H1 (cell line): ENCODE measurements at regions of chr10 and their contacts with region 1.

Region 1: GRCh38 chr10:77148996-77149395 is 488.6 kb downstream of the KCNMA1 start:
- DNase-seq: no peak
- H3K4me3 ChIP-seq: no peak overlapping the region
- H3K27ac ChIP-seq: no peak overlapping the region
- H3K4me1 ChIP-seq: peaks cover 4 to 14% (median 12%) of the 10 kb centered on the region in 4 experiments; a peak in 6 of 7 replicates
- H3K27me3 ChIP-seq: no peaks in the 10 kb centered on the region
- CTCF ChIP-seq: no peak
- EP300 ChIP-seq: no peak
- POLR2A ChIP-seq: no peak
- RAD21 ChIP-seq: no peak

Region 2: DNA sequence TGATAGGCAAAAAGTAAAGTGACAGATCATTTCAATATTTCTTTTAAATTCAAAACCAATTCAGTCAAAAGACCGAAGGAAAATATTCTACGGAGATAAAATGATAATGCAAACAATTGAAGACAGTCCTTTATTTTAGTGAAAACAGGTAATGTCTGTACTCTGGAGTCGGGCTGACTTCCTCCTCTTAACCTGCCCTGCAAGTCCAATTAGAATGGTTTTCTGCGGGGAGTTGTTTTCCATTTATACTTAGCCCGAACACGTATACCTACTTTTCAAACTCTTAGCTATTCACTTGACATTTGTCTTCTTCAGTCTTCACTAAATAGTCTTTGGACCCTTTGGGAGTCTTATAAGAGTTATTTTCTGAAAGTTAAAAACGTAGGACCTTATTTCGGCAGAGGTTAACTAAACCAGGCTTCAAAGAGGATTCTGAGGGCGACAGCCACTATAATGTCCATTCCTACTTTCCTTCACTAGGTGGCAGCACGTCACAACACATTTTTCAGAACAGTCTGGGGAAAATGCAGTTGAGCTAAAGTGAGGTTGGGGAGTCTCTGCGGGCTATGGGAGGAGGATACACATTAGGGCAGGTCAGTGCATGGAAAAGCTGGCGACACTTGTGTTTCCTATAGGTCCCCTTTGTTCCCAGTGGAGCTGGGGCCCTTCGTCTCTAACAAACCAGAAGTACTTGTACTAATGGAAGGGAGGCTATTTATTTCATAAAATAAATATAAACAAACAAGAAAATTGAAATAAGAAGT is 16.6 kb after region 1 on chr10:
- CTCF ChIA-PET with region 1: interaction called, 10 read pairs
- POLR2A ChIA-PET with region 1: no interaction called
- DNase-seq: peak; percentile 41 to 74
- H3K4me3 ChIP-seq: no peak overlapping the region
- H3K27ac ChIP-seq: no peak overlapping the region
- H3K4me1 ChIP-seq: no peaks in the 10 kb centered on the region
- H3K27me3 ChIP-seq: no peaks in the 10 kb centered on the region
- CTCF ChIP-seq: peak; percentile 26 to 84 (median 71)
- EP300 ChIP-seq: no peak
- POLR2A ChIP-seq: no peak
- RAD21 ChIP-seq: peak; percentile 91 to 95